A673 (cell line): ENCODE measurements at regions of chr12 and their contacts with region 1.

Region 1: GRCh38 chr12:49060237-49061156 is at the start of gene KMT2D:
- DNase-seq: peak; percentile 98
- H3K4me3 ChIP-seq: peak within 1 kb of the TSS; percentile 98
- H3K27ac ChIP-seq: peak within 1 kb of the TSS; percentile 100
- H3K4me1 ChIP-seq: peaks cover 18% of the 10 kb centered on the region
- H3K27me3 ChIP-seq: no peaks in the 10 kb centered on the region
- CTCF ChIP-seq: peak; percentile 29; the same call in 1 of the 2 replicates
- total RNA-seq, gene KMT2D: 121 and 138 TPM in 2 replicates

Region 2: DNA sequence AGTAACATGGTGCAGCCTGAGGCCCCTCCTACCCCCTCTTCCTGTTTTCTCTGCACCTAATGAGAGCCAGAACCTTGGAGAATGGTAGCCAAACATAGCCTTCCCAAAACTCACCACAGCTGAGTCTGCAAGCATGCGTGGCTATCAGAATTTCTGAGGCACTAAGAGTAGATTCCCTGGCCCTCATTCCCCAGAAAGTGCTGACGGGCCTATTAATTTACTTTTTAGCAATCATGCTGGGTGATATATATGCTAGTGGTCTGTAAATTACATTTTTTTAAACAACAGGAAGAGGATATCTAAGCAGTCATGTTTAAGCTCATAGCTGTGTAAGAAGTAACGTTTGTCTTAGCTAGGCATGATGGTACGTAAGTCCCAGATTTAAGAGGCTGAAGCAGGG is 408.8 kb before region 1 on chr12:
- CTCF ChIA-PET with region 1: no interaction called
- POLR2A ChIA-PET with region 1: no interaction called
- intact Hi-C with region 1: no loop called
- DNase-seq: no peak
- H3K4me3 ChIP-seq: no peak overlapping the region
- H3K27ac ChIP-seq: peak overlapping the region; percentile 12
- H3K4me1 ChIP-seq: no peaks in the 10 kb centered on the region
- H3K27me3 ChIP-seq: no peaks in the 10 kb centered on the region
- CTCF ChIP-seq: no peak

Region 3: GRCh38 chr12:49098035-49098451 is 37.5 kb after region 1 on chr12:
- CTCF ChIA-PET with region 1: interaction called, 5 read pairs
- POLR2A ChIA-PET with region 1: no interaction called
- intact Hi-C with region 1: loop called (anchors 1 kb)
- DNase-seq: peak; percentile 67
- H3K4me3 ChIP-seq: no peak overlapping the region
- H3K27ac ChIP-seq: no peak overlapping the region
- H3K4me1 ChIP-seq: no peaks in the 10 kb centered on the region
- H3K27me3 ChIP-seq: peaks cover 24% of the 10 kb centered on the region
- CTCF ChIP-seq: peak; percentile 86

Region 4: DNA sequence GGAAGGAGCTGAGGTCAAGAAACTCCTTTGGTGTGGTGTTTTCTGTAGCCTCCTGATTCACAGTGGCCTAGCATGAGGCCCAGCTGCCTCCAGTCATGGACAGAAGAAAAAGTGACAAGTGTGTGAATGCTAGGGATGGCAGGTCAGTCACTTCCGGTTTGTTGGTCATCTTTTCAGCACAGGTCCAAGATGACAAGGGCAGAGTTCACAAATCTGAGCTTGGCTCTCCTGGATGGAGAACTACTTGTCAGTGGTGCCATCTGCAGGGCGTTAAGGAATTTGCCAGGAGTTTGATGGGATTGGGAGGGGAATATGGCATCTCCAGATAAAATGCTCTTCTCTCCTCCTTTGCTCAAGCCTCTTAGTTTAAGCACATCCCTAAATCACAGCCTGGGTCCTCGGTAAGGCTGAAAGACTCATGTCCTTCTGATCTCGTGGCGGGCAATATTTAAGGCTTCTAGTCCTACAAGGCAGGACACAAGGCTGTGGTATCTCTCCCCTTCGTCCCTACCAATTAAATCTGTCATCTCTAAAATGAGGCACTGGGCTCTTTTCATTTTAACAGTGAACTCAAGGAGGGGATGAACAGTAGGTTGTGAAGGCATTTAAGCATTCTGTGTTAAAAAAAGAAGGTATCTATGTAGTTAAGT is 60.7 kb after region 1 on chr12:
- CTCF ChIA-PET with region 1: interaction called, 6 read pairs
- POLR2A ChIA-PET with region 1: no interaction called
- intact Hi-C with region 1: loop called (anchors 2 kb)
- DNase-seq: peak; percentile 53
- H3K4me3 ChIP-seq: no peak overlapping the region
- H3K27ac ChIP-seq: no peak overlapping the region
- H3K4me1 ChIP-seq: no peaks in the 10 kb centered on the region
- H3K27me3 ChIP-seq: no peaks in the 10 kb centered on the region
- CTCF ChIP-seq: peak; percentile 72

Region 5: DNA sequence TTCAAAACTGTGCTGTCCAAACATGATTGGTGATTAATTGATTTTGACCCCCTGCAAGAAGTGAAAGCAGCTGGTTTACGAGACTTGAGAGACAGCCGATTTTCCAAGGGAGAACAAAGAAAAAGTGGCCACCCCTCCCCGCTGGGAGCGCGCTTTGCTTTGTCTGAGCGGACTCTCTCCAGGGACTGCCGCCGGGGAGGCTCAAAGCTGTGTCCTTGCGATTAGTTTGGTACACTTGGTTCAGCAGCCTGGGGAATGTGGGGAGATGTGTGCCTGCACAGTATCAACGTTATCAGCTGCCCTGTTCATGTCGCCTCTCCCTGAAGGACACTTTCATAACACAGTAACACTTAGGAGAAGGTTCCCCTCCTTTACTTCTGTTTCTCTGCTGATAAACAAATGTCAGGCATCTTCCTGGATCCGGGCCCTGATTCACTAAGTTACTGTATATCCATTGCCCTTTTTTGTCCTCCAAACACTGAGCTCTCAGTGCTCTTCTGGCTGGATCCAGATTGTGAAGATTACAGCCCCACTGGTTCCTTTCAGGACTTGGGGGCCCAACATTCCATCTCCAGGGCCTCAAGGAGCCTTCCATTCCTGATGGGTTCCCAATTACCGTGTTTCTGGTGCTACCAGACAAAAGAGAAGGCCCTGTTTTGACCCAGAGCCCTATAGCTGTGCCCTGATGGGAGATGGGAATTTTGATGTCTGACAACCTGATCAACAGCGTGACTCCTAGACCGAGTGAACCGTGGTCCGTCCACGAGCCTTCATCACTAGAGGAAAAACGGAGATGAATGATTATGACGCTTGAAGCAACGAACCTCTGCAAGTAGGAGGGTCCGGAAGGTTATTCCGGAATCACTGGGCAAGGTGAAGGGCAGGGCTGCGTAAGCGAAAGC is 172.7 kb after region 1 on chr12:
- CTCF ChIA-PET with region 1: interaction called, 6 read pairs
- POLR2A ChIA-PET with region 1: no interaction called
- intact Hi-C with region 1: loop called (anchors 5 kb)
- DNase-seq: peak; percentile 89
- H3K4me3 ChIP-seq: peak overlapping the region; percentile 9
- H3K27ac ChIP-seq: peak overlapping the region; percentile 60
- H3K4me1 ChIP-seq: peaks cover 21% of the 10 kb centered on the region
- H3K27me3 ChIP-seq: no peaks in the 10 kb centered on the region
- CTCF ChIP-seq: peak; percentile 29; the same call in 1 of the 2 replicates

Region 6: DNA sequence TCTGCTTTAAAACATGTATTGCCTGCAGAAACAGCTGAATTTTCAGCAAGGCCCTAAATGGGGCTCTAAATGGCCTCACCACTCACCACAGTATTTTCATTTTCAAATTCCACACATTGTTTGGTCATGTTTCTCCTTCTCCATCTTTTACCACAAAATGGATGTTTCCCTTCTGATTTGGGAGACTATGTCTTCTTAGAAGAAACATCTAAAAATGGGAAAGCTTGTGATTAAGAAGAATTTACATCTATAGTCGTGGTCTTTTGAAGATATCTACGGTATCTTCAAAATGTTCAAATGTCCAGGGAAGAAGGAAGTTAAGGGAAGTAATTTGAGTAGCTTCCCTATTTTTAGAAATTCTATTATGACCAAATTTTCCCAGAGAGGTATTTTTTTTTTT is 183.7 kb after region 1 on chr12:
- CTCF ChIA-PET with region 1: interaction called, 10 read pairs
- POLR2A ChIA-PET with region 1: no interaction called
- intact Hi-C with region 1: loop called (anchors 5 kb)
- DNase-seq: no peak
- H3K4me3 ChIP-seq: no peak overlapping the region
- H3K27ac ChIP-seq: no peak overlapping the region
- H3K4me1 ChIP-seq: no peaks in the 10 kb centered on the region
- H3K27me3 ChIP-seq: no peaks in the 10 kb centered on the region
- CTCF ChIP-seq: no peak